CD4-positive, alpha-beta T cell (primary cell): ENCODE measurements at regions of chr6 and their contacts with region 1.

Region 1: GRCh38 chr6:22145823-22146677 is 150.8 kb downstream of the PRL start:
- DNase-seq: peak in 5 of 14 experiments; percentile 1 to 39 (median 13)
- ATAC-seq: peak; percentile 24
- H3K4me3 ChIP-seq: peak overlapping the region; percentile 45
- H3K4me3 Mint-ChIP-seq: peak overlapping the region; percentile 87
- H3K27ac ChIP-seq: no peak overlapping the region
- H3K27ac Mint-ChIP-seq: peak overlapping the region; percentile 80
- H3K4me1 ChIP-seq: no peaks in the 10 kb centered on the region
- H3K4me1 Mint-ChIP-seq: peaks cover 51% of the 10 kb centered on the region
- H3K27me3 ChIP-seq: peaks cover 8 to 21% of the 10 kb centered on the region in 2 experiments
- H3K27me3 Mint-ChIP-seq: peaks cover 38% of the 10 kb centered on the region
- CTCF ChIP-seq: no peak

Region 2: DNA sequence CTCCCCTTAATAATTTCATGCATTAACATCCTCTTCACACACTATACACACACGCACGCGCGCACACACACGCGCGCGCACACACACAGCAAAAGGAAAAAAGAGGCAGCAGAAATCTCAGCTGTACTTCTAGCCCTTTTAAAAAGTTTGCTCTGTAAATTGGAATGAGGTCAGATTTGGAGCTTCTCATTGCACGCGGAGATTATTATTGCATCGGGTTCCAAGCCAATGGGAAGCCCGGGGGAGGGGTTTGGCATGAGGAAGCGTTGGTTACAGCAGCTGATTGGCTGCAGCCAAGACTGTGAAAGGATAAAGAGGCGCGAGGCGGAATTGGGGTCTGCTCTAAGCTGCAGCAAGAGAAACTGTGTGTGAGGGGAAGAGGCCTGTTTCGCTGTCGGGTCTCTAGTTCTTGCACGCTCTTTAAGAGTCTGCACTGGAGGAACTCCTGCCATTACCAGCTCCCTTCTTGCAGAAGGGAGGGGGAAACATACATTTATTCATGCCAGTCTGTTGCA is 552.6 kb before region 1 on chr6 and contains the start of gene SOX4:
- CTCF ChIA-PET with region 1: no interaction called
- POLR2A ChIA-PET with region 1: interaction called, 53 read pairs
- intact Hi-C with region 1: loop called in 1 of 2 experiments (anchors 2 kb)
- DNase-seq: peak in 13 of 14 experiments; percentile 15 to 83 (median 49)
- ATAC-seq: peak; percentile 74
- H3K4me3 ChIP-seq: peak within 1 kb of the TSS; percentile 62
- H3K4me3 Mint-ChIP-seq: peak within 1 kb of the TSS; percentile 91
- H3K27ac ChIP-seq: no peak within 1 kb of the TSS
- H3K27ac Mint-ChIP-seq: peak within 1 kb of the TSS; percentile 79
- H3K4me1 ChIP-seq: peaks cover 34% of the 10 kb centered on the region
- H3K4me1 Mint-ChIP-seq: peaks cover 34% of the 10 kb centered on the region
- H3K27me3 ChIP-seq: peaks cover 37 to 48% of the 10 kb centered on the region in 2 experiments
- H3K27me3 Mint-ChIP-seq: peaks cover 59% of the 10 kb centered on the region
- CTCF ChIP-seq: no peak
- total RNA-seq, gene SOX4: 22.1 to 22.6 TPM

Region 3: GRCh38 chr6:21831521-21832291 is 314.3 kb before region 1 on chr6:
- CTCF ChIA-PET with region 1: no interaction called
- POLR2A ChIA-PET with region 1: no interaction called
- intact Hi-C with region 1: no loop called
- DNase-seq: no peak
- ATAC-seq: no peak
- H3K4me3 ChIP-seq: no peak overlapping the region
- H3K4me3 Mint-ChIP-seq: no peak overlapping the region
- H3K27ac ChIP-seq: no peak overlapping the region
- H3K27ac Mint-ChIP-seq: peak overlapping the region; percentile 7
- H3K4me1 ChIP-seq: no peaks in the 10 kb centered on the region
- H3K4me1 Mint-ChIP-seq: peaks cover 6% of the 10 kb centered on the region
- H3K27me3 ChIP-seq: no peaks in the 10 kb centered on the region
- H3K27me3 Mint-ChIP-seq: no peaks in the 10 kb centered on the region
- CTCF ChIP-seq: no peak

Region 4: DNA sequence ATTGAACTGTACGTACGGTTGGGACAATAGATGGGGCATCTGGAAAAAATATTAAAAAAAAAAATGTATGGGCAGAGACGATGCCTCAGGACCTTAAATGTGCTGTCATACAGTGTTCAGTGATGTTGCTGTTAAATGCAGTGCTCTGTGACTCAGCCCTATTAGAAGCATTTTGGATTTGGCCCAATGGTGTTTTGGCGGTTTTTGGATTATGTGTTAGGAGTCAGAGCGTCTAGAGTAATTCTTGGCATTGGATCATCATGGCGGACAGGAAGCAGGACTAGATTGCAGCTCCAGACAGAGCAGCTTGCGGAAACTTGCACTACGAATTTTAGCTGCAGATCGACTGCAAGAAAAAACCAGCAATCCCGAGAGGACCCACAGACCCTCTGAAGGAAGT is 272.5 kb before region 1 on chr6:
- CTCF ChIA-PET with region 1: no interaction called
- POLR2A ChIA-PET with region 1: no interaction called
- intact Hi-C with region 1: loop called in 1 of 2 experiments (anchors 2 kb)
- DNase-seq: no peak
- ATAC-seq: no peak
- H3K4me3 ChIP-seq: no peak overlapping the region
- H3K4me3 Mint-ChIP-seq: no peak overlapping the region
- H3K27ac ChIP-seq: no peak overlapping the region
- H3K27ac Mint-ChIP-seq: no peak overlapping the region
- H3K4me1 ChIP-seq: no peaks in the 10 kb centered on the region
- H3K4me1 Mint-ChIP-seq: peaks cover 8% of the 10 kb centered on the region
- H3K27me3 ChIP-seq: no peaks in the 10 kb centered on the region
- H3K27me3 Mint-ChIP-seq: no peaks in the 10 kb centered on the region
- CTCF ChIP-seq: no peak

Region 5: GRCh38 chr6:21914121-21914973 is 231.7 kb before region 1 on chr6:
- CTCF ChIA-PET with region 1: no interaction called
- POLR2A ChIA-PET with region 1: interaction called, 4 read pairs
- intact Hi-C with region 1: loop called in 1 of 2 experiments (anchors 10 kb)
- DNase-seq: peak; percentile 2 to 62 (median 28)
- ATAC-seq: peak; percentile 48
- H3K4me3 ChIP-seq: no peak overlapping the region
- H3K4me3 Mint-ChIP-seq: peak overlapping the region; percentile 78
- H3K27ac ChIP-seq: no peak overlapping the region
- H3K27ac Mint-ChIP-seq: peak overlapping the region; percentile 83
- H3K4me1 ChIP-seq: no peaks in the 10 kb centered on the region
- H3K4me1 Mint-ChIP-seq: peaks cover 31% of the 10 kb centered on the region
- H3K27me3 ChIP-seq: no peaks in the 10 kb centered on the region
- H3K27me3 Mint-ChIP-seq: no peaks in the 10 kb centered on the region
- CTCF ChIP-seq: no peak

Region 6: GRCh38 chr6:22045261-22045912 is 100.7 kb before region 1 on chr6:
- CTCF ChIA-PET with region 1: no interaction called
- POLR2A ChIA-PET with region 1: interaction called, 4 read pairs
- intact Hi-C with region 1: loop called in 1 of 2 experiments (anchors 5 kb)
- DNase-seq: peak in 2 of 14 experiments; percentile 24 to 39
- ATAC-seq: peak; percentile 76
- H3K4me3 ChIP-seq: no peak overlapping the region
- H3K4me3 Mint-ChIP-seq: peak overlapping the region; percentile 3
- H3K27ac ChIP-seq: no peak overlapping the region
- H3K27ac Mint-ChIP-seq: peak overlapping the region; percentile 32
- H3K4me1 ChIP-seq: no peaks in the 10 kb centered on the region
- H3K4me1 Mint-ChIP-seq: peaks cover 7% of the 10 kb centered on the region
- H3K27me3 ChIP-seq: no peaks in the 10 kb centered on the region
- H3K27me3 Mint-ChIP-seq: no peaks in the 10 kb centered on the region
- CTCF ChIP-seq: no peak

Region 7: DNA sequence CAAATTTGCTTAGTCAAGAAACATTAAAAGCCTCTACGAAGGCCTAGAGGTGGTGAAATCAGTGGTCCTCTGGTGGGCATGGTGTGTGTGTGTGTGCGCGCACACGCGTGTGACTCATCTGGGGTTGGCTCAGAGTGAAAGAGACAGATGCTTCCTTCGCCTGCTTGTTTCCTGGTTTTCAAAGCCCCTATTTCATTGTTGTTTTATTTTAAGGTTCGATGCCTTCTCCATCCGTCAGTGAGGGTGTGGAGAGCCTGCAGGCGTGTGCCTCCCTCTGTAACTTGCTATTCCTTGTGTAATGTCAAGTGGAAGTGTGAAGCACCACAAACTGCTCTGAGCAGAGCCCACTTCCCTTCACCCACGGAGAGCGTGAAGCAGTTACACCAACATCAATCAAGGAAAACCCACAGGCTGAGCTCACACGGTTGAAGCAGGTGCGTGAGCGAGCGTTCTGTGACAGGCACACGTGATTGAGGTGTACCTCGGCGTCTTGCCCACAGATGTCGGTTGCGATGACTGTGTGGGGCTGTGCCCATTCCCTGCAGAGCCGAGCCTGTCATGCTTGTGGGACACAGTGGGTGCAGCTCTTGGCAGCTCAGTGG is 83.1 kb before region 1 on chr6:
- CTCF ChIA-PET with region 1: no interaction called
- POLR2A ChIA-PET with region 1: no interaction called
- intact Hi-C with region 1: loop called in 1 of 2 experiments (anchors 2 kb)
- DNase-seq: peak in 10 of 14 experiments; percentile 1 to 77 (median 42)
- ATAC-seq: peak; percentile 89
- H3K4me3 ChIP-seq: peak overlapping the region; percentile 15
- H3K4me3 Mint-ChIP-seq: peak overlapping the region; percentile 56
- H3K27ac ChIP-seq: no peak overlapping the region
- H3K27ac Mint-ChIP-seq: peak overlapping the region; percentile 65
- H3K4me1 ChIP-seq: peaks cover 9% of the 10 kb centered on the region
- H3K4me1 Mint-ChIP-seq: peaks cover 19% of the 10 kb centered on the region
- H3K27me3 ChIP-seq: no peaks in the 10 kb centered on the region
- H3K27me3 Mint-ChIP-seq: no peaks in the 10 kb centered on the region
- CTCF ChIP-seq: no peak